ENCODE measurements at regions of chr2 and their contacts with region 1.

Region 1: GRCh38 chr2:36246320-36246990 is 109.1 kb upstream of the CRIM1 start:
- DNase-seq: peak; percentile 21
- CTCF ChIP-seq: no peak

Region 2: GRCh38 chr2:36222485-36222884 is 24.0 kb before region 1 on chr2:
- CTCF ChIA-PET with region 1: interaction called, 10 read pairs
- POLR2A ChIA-PET with region 1: no interaction called
- DNase-seq: no peak
- CTCF ChIP-seq: no peak

Region 3: DNA sequence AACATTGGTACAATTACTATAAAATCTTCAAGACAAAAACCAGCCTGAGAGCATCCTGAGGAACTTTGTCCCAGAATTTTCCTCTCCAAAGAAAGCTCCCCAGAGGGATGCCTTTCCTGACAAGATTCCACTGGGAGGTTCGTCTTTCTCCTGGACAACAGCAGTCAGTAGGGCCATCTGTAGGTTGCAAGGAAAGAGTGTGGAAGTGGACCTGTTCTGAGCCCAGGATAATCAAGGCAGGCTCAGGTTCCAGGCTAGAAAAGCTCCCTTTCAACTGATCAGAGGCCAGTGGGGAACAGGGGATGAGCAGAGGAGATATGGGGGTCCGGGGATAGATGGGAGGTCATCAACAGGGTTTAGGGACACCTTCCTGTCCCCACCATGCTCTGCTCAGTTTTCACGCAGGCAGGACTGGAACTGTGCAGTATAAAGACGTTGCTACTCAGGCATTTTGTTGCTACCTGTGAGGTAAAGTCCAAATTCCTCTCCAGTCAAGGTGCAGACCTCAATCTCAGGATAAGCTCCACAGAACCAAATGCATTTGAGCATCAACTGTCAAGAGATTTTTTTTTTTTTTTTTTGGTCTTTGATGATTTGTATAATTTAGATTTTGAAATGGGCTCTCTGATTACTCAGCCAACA is 593.6 kb after region 1 on chr2:
- CTCF ChIA-PET with region 1: no interaction called
- POLR2A ChIA-PET with region 1: no interaction called
- DNase-seq: no peak
- CTCF ChIP-seq: no peak

Measured in GM10248 (cell line).